ENCODE measurements at regions of chr1 and their contacts with region 1.

Region 1: GRCh38 chr1:174769961-174770549 is 229.7 kb upstream of the CACYBP start:
- DNase-seq: peak; percentile 51
- CTCF ChIP-seq: peak; percentile 47

Region 2: GRCh38 chr1:174990382-174990999 is 220.4 kb after region 1 on chr1:
- in situ Hi-C with region 1: loop called (anchors 5 kb)
- DNase-seq: peak; percentile 36
- CTCF ChIP-seq: no peak